ENCODE measurements at regions of chr6 and their contacts with region 1.

Region 1: GRCh38 chr6:99588618-99589289 is 17.9 kb upstream of the PRDM13 start:
- DNase-seq: peak; percentile 73
- H3K4me3 ChIP-seq: peak overlapping the region; percentile 51 to 65 (median 60)
- H3K27ac ChIP-seq: no peak overlapping the region
- H3K4me1 ChIP-seq: peaks cover 10% of the 10 kb centered on the region
- H3K27me3 ChIP-seq: peaks cover 32% of the 10 kb centered on the region
- CTCF ChIP-seq: peak; percentile 46 to 79

Region 2: GRCh38 chr6:99736302-99736701 is 147.5 kb after region 1 on chr6:
- CTCF ChIA-PET with region 1: no interaction called
- dilution Hi-C with region 1: no loop called
- in situ Hi-C with region 1: no loop called
- intact Hi-C with region 1: loop called (anchors 2 kb)
- DNase-seq: no peak
- H3K4me3 ChIP-seq: no peak overlapping the region
- H3K27ac ChIP-seq: no peak overlapping the region
- H3K4me1 ChIP-seq: no peaks in the 10 kb centered on the region
- H3K27me3 ChIP-seq: peaks cover 15% of the 10 kb centered on the region
- CTCF ChIP-seq: no peak

Region 3: DNA sequence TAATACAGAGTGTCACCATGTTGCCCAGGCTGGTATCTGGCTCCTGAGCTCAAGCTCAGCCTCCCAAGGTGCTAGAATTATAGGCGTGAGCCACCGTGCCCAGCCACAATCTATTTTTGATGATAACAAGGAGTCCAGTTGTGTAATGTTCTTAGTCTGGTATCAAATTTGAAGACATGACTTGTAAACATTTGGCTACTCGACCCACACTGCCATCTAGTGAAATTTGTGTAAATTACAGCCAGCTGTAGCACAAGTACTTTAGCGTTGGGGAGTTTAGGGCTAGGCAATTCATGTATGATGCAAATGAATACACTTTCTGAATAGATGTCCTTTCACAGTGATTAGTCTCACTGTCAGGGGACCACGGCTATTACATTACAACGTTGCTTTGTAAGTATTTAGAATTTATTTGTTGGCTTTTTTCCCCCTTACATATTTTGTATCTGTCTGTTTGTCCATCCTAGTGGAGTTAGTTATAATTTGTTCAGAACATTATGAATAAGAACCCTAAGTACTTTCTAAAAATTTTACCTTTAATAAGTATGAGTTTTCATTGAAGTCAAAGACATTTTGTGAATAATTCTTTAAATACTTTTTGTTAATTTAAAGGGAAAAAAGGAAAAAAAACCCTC is 157.6 kb after region 1 on chr6:
- CTCF ChIA-PET with region 1: interaction called, 6 read pairs
- dilution Hi-C with region 1: no loop called
- in situ Hi-C with region 1: loop called in 1 of 2 experiments (anchors 25 kb)
- intact Hi-C with region 1: loop called (anchors 1 kb)
- DNase-seq: peak; percentile 61
- H3K4me3 ChIP-seq: no peak overlapping the region
- H3K27ac ChIP-seq: no peak overlapping the region
- H3K4me1 ChIP-seq: peaks cover 13% of the 10 kb centered on the region
- H3K27me3 ChIP-seq: peaks cover 2% of the 10 kb centered on the region
- CTCF ChIP-seq: peak; percentile 85 to 90

Region 4: DNA sequence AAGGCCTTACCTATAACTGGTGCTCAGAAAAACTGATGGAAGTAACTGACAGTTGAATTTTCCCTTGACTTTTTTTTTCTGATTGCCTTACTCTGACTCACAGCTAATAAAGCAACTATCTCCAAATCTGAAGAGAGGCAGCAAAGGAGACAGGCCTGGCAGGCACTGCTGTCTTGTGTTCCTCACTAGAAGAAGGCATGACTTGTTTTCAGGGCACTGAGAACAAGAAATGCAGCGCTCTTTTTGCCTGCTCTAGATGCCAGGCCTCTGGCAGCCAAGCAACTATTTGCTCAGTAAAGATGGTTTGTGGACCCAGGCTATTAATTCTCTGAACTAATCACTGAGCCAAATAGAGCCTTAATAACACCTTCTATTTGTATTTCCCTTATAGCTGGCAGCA is 173.0 kb after region 1 on chr6:
- CTCF ChIA-PET with region 1: no interaction called
- dilution Hi-C with region 1: no loop called
- in situ Hi-C with region 1: loop called in 1 of 2 experiments (anchors 25 kb)
- intact Hi-C with region 1: no loop called
- DNase-seq: no peak
- H3K4me3 ChIP-seq: no peak overlapping the region
- H3K27ac ChIP-seq: no peak overlapping the region
- H3K4me1 ChIP-seq: no peaks in the 10 kb centered on the region
- H3K27me3 ChIP-seq: no peaks in the 10 kb centered on the region
- CTCF ChIP-seq: no peak

Region 5: DNA sequence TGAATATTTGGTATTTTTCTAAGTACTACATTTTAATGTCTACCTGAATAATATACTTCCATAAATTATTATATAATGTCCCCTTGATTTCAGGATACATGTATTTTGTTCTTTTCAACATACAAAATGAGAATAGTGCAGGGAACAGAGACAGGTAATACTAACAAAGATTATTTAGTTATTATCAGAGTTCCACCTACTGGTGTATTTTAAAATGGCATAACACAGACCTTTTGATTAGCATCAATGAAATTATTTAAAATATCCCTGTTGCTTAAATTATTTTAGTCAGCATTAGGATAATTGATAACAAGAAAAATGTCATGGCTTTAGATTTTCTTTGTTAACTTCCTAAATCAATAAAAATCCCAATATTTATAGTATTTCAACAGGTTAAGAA is 201.9 kb after region 1 on chr6:
- CTCF ChIA-PET with region 1: no interaction called
- dilution Hi-C with region 1: no loop called
- in situ Hi-C with region 1: no loop called
- intact Hi-C with region 1: loop called (anchors 1 kb)
- DNase-seq: no peak
- H3K4me3 ChIP-seq: no peak overlapping the region
- H3K27ac ChIP-seq: no peak overlapping the region
- H3K4me1 ChIP-seq: no peaks in the 10 kb centered on the region
- H3K27me3 ChIP-seq: no peaks in the 10 kb centered on the region
- CTCF ChIP-seq: peak in 1 of 2 donors; percentile 33

Region 6: GRCh38 chr6:99822741-99823512 is 234.2 kb after region 1 on chr6:
- CTCF ChIA-PET with region 1: interaction called, 4 read pairs
- dilution Hi-C with region 1: no loop called
- in situ Hi-C with region 1: no loop called
- intact Hi-C with region 1: loop called (anchors 5 kb)
- DNase-seq: peak; percentile 69
- H3K4me3 ChIP-seq: peak overlapping the region in 2 of 3 experiments; percentile 17 to 30
- H3K27ac ChIP-seq: no peak overlapping the region
- H3K4me1 ChIP-seq: peaks cover 9% of the 10 kb centered on the region
- H3K27me3 ChIP-seq: no peaks in the 10 kb centered on the region
- CTCF ChIP-seq: peak; percentile 66 to 75

Region 7: GRCh38 chr6:100099189-100100074 is 510.7 kb after region 1 on chr6:
- CTCF ChIA-PET with region 1: no interaction called
- dilution Hi-C with region 1: no loop called
- in situ Hi-C with region 1: no loop called
- intact Hi-C with region 1: loop called (anchors 5 kb)
- DNase-seq: no peak
- H3K4me3 ChIP-seq: no peak overlapping the region
- H3K27ac ChIP-seq: no peak overlapping the region
- H3K4me1 ChIP-seq: no peaks in the 10 kb centered on the region
- H3K27me3 ChIP-seq: peaks cover 2% of the 10 kb centered on the region
- CTCF ChIP-seq: peak; percentile 55

Measured in mammary epithelial cell (primary cell).